AG04449 (cell line): ENCODE measurements at regions of chr12 and their contacts with region 1.

Region 1: GRCh38 chr12:56571126-56571525 is 49.5 kb downstream of the RBMS2 start:
- DNase-seq: no peak
- H3K4me3 ChIP-seq: no peak overlapping the region
- CTCF ChIP-seq: no peak

Region 2: DNA sequence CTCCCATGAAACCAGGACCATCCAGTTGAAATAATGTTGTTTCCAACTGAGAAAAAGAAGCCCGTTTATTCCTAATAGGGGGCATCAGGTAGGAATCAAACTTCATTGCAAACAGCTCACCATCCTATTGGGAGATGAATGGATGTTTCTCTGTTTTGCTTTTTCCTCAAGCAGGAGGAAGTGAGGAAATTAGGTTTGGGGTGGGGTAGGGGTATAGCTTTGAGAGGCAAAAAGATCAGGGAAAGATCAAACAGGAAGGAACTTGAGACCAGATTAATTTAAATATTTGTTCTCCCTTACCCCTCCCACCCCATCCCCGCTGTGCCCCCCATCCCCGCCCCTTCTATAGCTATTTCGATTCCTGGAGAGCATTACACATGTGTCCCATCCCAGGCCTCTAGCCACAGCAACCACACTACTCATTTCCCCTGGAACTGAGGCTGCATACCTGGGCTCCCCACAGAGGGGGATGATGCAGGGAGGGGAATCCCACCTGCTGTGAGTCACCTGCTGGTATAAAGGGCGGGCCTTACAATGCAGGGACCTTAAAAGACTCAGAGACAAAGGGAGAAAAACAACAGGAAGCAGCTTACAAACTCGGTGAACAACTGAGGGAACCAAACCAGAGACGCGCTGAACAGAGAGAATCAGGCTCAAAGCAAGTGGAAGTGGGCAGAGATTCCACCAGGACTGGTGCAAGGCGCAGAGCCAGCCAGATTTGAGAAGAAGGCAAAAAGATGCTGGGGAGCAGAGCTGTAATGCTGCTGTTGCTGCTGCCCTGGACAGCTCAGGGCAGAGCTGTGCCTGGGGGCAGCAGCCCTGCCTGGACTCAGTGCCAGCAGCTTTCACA is 232.6 kb before region 1 on chr12 and contains the start of gene IL23A:
- CTCF ChIA-PET with region 1: no interaction called
- POLR2A ChIA-PET with region 1: no interaction called
- DNase-seq: no peak
- H3K4me3 ChIP-seq: no peak within 1 kb of the TSS
- CTCF ChIP-seq: no peak

Region 3: GRCh38 chr12:56510786-56511185 is 60.3 kb before region 1 on chr12:
- CTCF ChIA-PET with region 1: interaction called, 226 read pairs
- POLR2A ChIA-PET with region 1: no interaction called
- DNase-seq: no peak
- H3K4me3 ChIP-seq: no peak overlapping the region
- CTCF ChIP-seq: no peak

Region 4: DNA sequence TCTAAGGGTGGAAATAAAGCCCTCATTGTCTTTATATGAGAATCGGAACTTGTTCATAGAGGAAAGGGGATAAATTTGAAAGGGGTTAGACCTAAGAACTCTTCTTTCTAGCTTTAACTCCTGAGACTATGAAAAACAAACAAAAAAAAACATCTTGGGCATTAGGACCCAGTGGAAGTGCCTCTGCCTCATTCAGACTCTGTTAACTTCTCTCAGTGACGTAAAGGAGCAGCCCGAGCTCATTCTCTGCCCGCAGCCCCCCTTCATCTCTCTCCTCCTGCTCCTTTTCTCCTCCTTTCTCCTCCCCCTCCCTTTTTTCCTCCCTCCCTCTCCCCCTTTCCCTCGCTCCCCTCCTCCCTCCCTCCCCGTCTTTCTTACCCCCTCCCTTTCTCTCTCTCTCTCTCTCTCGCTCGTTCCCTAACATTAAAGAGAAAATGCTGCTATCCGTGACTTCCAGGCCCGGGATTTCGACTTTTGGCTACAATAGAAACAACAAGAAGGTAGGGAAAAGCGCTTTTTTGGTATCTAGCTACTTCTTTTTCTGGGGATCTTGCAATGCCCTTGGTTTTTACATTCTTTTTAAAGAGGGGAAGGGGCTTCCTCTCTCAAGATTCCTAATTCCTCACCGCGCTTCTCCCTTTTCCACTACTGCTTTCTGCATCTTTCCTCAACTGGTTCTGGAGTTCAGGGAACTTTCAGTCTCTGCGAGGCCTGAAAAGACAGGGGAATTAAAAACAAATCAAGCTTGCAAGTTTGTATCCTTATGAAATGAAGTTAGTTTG is 49.3 kb before region 1 on chr12 and contains the start of gene RBMS2:
- CTCF ChIA-PET with region 1: interaction called, 226 read pairs
- POLR2A ChIA-PET with region 1: no interaction called
- DNase-seq: peak; percentile 63
- H3K4me3 ChIP-seq: peak within 1 kb of the TSS; percentile 60
- CTCF ChIP-seq: no peak

Region 5: GRCh38 chr12:56551070-56551469 is 20.1 kb before region 1 on chr12:
- CTCF ChIA-PET with region 1: interaction called, 12 read pairs
- POLR2A ChIA-PET with region 1: no interaction called
- DNase-seq: no peak
- H3K4me3 ChIP-seq: no peak overlapping the region
- CTCF ChIP-seq: no peak

Region 6: GRCh38 chr12:56581418-56582145 is 10.5 kb after region 1 on chr12:
- CTCF ChIA-PET with region 1: interaction called, 24 read pairs
- POLR2A ChIA-PET with region 1: no interaction called
- DNase-seq: no peak
- H3K4me3 ChIP-seq: no peak overlapping the region
- CTCF ChIP-seq: no peak

Region 7: GRCh38 chr12:56593909-56594621 is 22.9 kb after region 1 on chr12:
- CTCF ChIA-PET with region 1: interaction called, 17 read pairs
- POLR2A ChIA-PET with region 1: no interaction called
- DNase-seq: peak; percentile 46
- H3K4me3 ChIP-seq: no peak overlapping the region
- CTCF ChIP-seq: peak; percentile 89